ENCODE measurements at regions of chr6 and their contacts with region 1.

Region 1: GRCh38 chr6:137799950-137800568 is 67.0 kb upstream of the TNFAIP3 start:
- DNase-seq: peak in 1 of 2 donors; percentile 17
- ATAC-seq: peak in 1 of 4 donors; percentile 42
- H3K4me3 ChIP-seq: no peak overlapping the region
- H3K27ac ChIP-seq: no peak overlapping the region
- H3K4me1 ChIP-seq: no peaks in the 10 kb centered on the region
- H3K27me3 ChIP-seq: no peaks in the 10 kb centered on the region
- CTCF ChIP-seq: peak; percentile 47

Region 2: GRCh38 chr6:137764464-137764863 is 35.6 kb before region 1 on chr6:
- intact Hi-C with region 1: no loop called
- DNase-seq: no peak
- ATAC-seq: no peak
- H3K4me3 ChIP-seq: no peak overlapping the region
- H3K27ac ChIP-seq: no peak overlapping the region
- H3K4me1 ChIP-seq: no peaks in the 10 kb centered on the region
- H3K27me3 ChIP-seq: no peaks in the 10 kb centered on the region
- CTCF ChIP-seq: no peak

Region 3: GRCh38 chr6:137846772-137847313 is 46.8 kb after region 1 on chr6:
- intact Hi-C with region 1: loop called in 1 of 2 experiments (anchors 2 kb)
- DNase-seq: peak; percentile 45 to 68
- ATAC-seq: peak in 2 of 4 donors; percentile 29 to 59
- H3K4me3 ChIP-seq: no peak overlapping the region
- H3K27ac ChIP-seq: no peak overlapping the region
- H3K4me1 ChIP-seq: no peaks in the 10 kb centered on the region
- H3K27me3 ChIP-seq: no peaks in the 10 kb centered on the region
- CTCF ChIP-seq: no peak